ENCODE measurements at regions of chr3 and their contacts with region 1.

Region 1: DNA sequence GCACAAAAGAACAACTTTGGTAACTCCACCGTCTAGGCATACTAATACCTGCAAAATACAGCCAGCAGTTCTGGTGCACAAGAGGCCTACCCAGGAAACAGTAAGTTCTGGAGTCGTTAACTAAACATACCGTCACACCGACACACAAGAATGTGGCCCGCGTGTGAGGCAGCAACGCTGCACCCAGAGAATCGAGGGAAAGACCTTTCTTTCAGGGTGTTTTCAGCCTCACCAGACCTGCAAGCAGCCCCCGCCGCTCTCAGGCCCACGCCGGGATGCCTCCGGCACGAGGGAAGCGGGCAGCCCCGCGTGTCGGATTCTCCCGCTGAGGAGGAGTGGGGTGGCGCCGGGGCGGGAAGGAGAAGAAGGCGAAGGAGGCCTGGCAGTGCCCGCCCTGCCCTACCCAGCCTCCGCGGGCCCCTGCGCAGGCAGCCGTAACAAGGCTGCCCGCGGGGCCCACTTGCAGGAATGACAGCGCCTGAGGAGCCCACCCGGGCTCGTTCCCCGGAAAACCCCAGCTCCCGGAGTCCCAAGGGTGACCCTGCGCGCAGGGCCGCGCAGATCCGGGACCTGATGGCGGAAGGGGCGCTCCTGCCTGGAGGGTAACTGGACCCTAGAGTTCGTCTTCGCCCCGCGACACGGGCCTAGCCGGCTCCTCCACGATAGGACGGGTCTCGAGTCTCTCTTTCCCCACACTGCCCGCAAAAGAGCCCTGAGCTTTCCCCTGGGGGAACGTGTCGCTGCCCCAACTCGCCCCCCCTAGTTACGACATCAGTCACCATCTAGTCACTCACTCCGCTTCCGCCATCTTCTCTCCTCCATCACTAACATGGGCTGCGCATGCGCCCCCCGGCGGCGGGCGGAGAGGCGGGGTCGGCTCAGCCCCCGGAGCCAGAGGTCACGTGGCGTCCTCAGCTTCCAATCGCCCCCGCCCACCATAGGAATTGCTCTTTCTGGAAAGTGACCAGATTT is at the start of gene PHC3:
- DNase-seq: peak; percentile 82
- H3K4me3 ChIP-seq: peak within 1 kb of the TSS; percentile 72 to 95 (median 94)
- H3K27ac ChIP-seq: peak within 1 kb of the TSS; percentile 83
- H3K4me1 ChIP-seq: peaks cover 17% of the 10 kb centered on the region
- H3K27me3 ChIP-seq: no peaks in the 10 kb centered on the region
- CTCF ChIP-seq: peak in 1 of 2 donors; percentile 15
- total RNA-seq, gene PHC3: 43.0 to 51.4 TPM

Region 2: DNA sequence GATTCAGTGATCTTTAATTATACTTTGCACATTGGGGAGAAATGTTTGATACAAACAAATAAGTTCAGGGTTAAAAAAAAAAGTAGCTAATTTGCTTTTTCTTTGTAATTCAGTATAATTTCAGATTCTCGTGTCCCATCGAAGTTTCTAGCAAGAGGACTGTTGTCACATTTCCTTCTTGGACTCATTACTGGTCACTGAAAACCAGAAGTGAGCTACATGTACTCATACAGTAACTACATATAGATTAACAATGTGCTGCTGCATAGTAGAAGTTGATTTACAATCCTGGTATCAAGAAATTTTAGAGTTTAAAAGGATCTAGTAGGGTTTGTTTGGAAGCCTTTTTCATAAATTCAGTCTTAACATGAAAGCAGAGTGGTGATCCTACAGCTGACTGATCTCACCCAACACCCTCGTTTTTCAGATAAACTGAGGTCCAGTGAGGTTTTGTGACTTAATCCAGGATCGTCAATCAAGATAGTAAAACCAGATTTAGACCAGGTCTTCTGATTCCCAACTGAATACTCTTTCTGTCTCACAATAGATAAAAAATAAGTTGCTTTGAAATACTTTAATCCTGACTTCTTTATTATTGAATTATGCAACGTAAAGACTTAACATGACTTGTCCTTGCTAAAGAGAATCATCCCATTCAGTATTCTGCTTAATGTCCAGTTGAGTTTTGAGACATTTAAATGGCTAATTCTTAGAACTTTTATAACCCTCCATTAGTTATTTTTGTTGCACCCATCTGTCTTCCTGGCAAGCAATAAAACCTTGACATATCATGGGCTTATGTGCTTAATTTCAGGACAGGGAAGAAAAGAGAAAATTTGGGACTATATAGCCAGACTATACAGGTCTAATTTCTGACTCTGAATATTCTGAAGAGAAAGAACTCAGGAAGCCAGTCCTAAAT is 211.8 kb before region 1 on chr3:
- CTCF ChIA-PET with region 1: no interaction called
- dilution Hi-C with region 1: no loop called
- in situ Hi-C with region 1: no loop called
- intact Hi-C with region 1: no loop called
- DNase-seq: no peak
- H3K4me3 ChIP-seq: no peak overlapping the region
- H3K27ac ChIP-seq: no peak overlapping the region
- H3K4me1 ChIP-seq: peaks cover 6% of the 10 kb centered on the region
- H3K27me3 ChIP-seq: no peaks in the 10 kb centered on the region
- CTCF ChIP-seq: no peak

Region 3: GRCh38 chr3:170117134-170117533 is 64.1 kb before region 1 on chr3:
- CTCF ChIA-PET with region 1: no interaction called
- dilution Hi-C with region 1: no loop called
- in situ Hi-C with region 1: loop called in 1 of 2 experiments (anchors 5 kb)
- intact Hi-C with region 1: no loop called
- DNase-seq: peak; percentile 16
- H3K4me3 ChIP-seq: no peak overlapping the region
- H3K27ac ChIP-seq: no peak overlapping the region
- H3K4me1 ChIP-seq: no peaks in the 10 kb centered on the region
- H3K27me3 ChIP-seq: no peaks in the 10 kb centered on the region
- CTCF ChIP-seq: peak; percentile 25 to 26

Region 4: DNA sequence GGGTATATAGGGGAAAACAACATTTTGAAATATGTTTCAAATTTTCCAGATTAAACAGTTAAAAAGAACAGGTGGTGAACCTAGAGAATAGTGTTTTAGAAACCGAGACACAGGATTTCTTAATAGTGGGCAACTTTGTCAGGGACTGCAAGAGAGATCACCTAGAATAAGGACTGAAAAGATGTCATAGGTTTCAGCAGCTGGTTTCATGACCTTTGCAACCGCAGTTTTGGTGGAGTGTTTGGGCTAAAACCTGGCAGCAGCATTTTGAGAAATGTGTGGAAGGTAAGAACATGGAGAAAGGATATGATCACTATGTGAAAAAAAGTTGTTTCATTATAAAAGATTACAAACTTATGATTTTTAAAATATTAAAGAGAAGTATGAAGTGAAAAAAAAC is 76.0 kb after region 1 on chr3:
- CTCF ChIA-PET with region 1: no interaction called
- dilution Hi-C with region 1: no loop called
- in situ Hi-C with region 1: no loop called
- intact Hi-C with region 1: loop called (anchors 2 kb)
- DNase-seq: no peak
- H3K4me3 ChIP-seq: no peak overlapping the region
- H3K27ac ChIP-seq: no peak overlapping the region
- H3K4me1 ChIP-seq: peaks cover 13% of the 10 kb centered on the region
- H3K27me3 ChIP-seq: no peaks in the 10 kb centered on the region
- CTCF ChIP-seq: no peak